ENCODE measurements at regions of chr12 and their contacts with region 1.

Region 1: DNA sequence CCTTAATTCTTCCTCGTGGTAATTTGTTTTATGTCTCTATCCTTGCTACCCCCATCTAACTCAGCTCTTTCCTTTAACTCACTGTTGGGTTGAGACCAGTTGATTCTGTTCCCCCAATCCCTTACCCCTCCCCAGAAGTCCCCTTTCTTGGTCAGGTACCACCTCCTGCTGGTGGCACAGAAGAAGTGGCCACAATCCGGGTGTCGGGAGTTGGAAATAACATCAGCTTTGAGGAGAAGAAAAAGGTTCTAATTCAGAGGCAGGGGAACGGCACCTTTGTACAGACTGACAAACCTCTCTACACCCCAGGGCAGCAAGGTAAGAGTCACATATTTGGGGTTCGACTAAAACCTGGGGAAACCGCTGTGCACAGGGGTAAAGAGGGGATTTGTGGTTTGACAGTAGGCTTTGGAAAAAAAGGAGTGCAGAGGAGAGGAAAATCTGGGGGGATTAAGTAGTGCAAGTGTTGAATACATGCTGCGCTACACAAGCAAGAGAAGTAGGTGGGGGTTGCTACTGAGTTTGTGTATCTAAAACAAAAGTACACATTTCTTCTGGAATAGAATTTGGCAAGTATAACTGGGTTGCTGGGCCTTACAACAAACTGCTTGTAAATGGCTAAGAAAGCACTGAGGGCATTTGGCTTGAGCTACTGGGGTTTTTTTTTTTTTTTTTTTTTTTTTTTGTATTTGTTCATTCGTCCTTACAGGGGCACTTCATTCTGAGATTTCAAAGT is 1.3 kb downstream of the A2ML1 start:
- DNase-seq: peak in 3 of 5 donors; percentile 27 to 59 (median 35)
- H3K4me3 ChIP-seq: no peak overlapping the region
- H3K27ac ChIP-seq: no peak overlapping the region
- H3K4me1 ChIP-seq: no peaks in the 10 kb centered on the region
- H3K27me3 ChIP-seq: no peaks in the 10 kb centered on the region
- CTCF ChIP-seq: peak; percentile 59

Region 2: DNA sequence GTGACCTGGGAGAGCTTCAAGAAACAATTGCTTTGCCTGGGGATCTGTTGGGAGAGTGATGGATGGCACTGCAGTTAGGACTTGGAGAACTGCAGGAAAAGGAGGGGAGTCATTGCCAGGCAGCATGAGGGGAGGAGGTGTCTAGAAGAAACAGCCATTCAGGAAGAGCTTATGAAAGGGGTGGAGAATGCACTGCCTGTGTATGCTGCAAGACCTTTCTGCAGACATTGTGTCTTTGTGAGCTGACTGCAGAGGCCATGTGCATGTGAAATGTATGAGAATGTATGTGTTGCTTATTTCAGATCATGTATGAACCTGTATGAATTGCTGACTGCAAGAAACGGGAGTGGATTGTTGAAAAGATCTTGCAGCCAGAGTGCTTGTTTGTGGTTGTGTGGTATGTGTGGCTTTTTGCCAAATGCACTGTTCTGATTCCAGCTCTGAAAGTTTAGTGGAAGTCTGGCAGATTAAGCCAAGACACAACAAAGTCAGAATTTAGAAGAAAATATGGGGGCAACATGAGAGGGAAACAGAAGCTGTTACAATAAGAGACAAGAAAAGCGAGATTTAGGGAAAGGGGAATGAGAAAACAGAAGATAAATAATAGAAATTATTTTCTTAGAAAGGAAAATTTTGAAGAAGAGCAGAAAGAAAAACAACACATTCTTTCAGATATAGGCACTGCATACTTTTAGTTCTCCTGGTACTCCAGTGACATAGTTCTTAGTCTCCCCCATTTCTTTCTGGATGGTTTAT is 135.7 kb before region 1 on chr12:
- intact Hi-C with region 1: loop called (anchors 10 kb)
- DNase-seq: peak in 4 of 5 donors; percentile 87 to 96 (median 91)
- H3K4me3 ChIP-seq: peak overlapping the region; percentile 36 to 45 (median 40)
- H3K27ac ChIP-seq: peak overlapping the region in 1 of 2 donors; percentile 67
- H3K4me1 ChIP-seq: peaks cover 8 to 14% (median 11%) of the 10 kb centered on the region in 3 donors
- H3K27me3 ChIP-seq: no peaks in the 10 kb centered on the region
- CTCF ChIP-seq: no peak

Region 3: DNA sequence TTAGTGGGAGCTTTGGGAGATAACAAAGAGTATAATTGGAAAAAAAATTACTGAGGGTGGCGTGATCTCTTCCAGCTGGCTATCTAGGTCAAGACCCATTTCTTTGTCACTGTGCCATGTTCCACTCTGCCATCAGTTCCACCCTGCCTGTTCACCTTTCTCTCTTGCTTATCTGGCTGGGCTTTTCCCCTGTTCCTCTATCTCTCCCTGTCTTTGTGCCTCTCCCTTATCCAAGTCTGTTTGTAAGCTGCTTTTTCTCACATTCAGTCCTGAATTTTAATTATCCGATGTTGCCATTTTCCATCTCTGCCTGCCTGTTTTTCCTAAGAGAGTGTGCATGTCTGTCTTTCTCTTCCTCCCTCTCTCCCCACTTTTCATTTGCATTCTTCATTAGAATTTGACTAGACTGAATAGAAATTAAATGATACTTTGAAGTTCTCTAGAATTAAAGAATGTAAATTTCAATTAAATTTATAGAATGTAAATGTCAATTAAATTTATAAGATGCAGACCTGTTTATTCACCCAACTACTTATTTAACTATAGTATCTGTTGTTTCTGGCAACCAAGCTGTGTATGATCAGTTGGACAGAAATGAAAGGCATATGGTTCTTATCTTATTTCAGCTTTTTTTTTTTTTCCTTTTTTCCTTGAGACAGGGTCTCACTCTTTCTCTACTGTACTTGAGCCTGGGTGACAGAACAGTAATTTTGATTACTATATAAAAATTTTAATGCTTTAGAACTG is 42.2 kb before region 1 on chr12:
- intact Hi-C with region 1: no loop called
- DNase-seq: no peak
- H3K4me3 ChIP-seq: no peak overlapping the region
- H3K27ac ChIP-seq: no peak overlapping the region
- H3K4me1 ChIP-seq: no peaks in the 10 kb centered on the region
- H3K27me3 ChIP-seq: no peaks in the 10 kb centered on the region
- CTCF ChIP-seq: no peak

Measured in kidney (tissue), 22 donors.